GM10248 (cell line): ENCODE measurements at regions of chr6 and their contacts with region 1.

Region 1: GRCh38 chr6:127996925-127997324 is 96.1 kb upstream of the THEMIS start:
- DNase-seq: no peak
- CTCF ChIP-seq: no peak

Region 2: DNA sequence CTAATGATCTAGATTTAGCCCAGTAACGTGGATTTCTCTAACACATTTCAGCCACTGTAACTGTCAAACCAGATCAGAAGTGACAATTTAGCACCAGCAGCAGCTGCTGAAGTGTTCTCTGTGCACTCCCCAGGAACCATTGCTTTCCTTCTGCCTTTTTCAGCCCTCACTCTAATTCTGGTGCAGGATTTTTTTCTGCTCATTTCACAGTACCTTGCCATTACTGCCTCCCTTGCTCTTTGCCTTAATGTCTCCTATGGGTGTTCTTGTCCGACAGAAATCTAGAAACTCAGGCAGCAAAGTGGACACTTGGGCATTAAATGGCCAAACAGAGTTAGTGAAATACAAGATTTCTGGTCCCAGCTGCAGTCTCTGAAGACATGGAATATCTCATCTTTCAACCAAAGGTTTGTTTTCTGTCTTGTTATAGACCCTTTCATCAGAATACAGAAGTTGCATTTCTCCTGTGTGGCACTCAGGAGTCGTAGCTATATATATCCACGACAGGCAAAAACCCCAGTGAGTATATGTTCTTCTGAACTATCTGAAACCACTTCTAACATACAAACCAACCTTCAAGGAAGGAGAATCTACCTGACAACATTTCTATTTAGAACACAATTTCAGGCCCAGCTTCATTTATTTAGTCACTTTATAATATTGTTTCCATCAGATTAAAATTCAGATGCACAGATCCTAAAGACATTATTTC is 189.0 kb before region 1 on chr6:
- CTCF ChIA-PET with region 1: no interaction called
- POLR2A ChIA-PET with region 1: no interaction called
- DNase-seq: no peak
- CTCF ChIP-seq: no peak

Region 3: DNA sequence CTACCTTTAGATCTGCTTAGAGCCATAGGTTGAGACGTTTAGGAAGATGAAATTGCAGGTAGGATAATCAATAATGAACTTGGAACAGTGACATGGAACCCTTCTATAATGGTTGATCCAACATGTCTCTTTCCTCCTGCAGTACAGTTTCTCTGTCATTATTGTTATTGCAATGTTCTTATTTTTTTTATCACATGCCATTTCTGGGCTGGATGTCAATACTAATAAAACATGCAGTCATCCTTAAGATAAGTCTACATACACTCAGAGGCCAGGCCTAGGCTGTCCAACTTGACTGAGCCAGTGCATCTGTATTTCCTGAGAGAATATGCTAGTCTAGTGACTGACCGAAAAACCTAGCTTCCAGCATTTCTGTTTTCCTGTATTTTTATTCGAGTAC is 20.8 kb before region 1 on chr6:
- CTCF ChIA-PET with region 1: interaction called, 10 read pairs
- POLR2A ChIA-PET with region 1: no interaction called
- DNase-seq: no peak
- CTCF ChIP-seq: no peak